ENCODE measurements at regions of chr16 and their contacts with region 1.

Region 1: DNA sequence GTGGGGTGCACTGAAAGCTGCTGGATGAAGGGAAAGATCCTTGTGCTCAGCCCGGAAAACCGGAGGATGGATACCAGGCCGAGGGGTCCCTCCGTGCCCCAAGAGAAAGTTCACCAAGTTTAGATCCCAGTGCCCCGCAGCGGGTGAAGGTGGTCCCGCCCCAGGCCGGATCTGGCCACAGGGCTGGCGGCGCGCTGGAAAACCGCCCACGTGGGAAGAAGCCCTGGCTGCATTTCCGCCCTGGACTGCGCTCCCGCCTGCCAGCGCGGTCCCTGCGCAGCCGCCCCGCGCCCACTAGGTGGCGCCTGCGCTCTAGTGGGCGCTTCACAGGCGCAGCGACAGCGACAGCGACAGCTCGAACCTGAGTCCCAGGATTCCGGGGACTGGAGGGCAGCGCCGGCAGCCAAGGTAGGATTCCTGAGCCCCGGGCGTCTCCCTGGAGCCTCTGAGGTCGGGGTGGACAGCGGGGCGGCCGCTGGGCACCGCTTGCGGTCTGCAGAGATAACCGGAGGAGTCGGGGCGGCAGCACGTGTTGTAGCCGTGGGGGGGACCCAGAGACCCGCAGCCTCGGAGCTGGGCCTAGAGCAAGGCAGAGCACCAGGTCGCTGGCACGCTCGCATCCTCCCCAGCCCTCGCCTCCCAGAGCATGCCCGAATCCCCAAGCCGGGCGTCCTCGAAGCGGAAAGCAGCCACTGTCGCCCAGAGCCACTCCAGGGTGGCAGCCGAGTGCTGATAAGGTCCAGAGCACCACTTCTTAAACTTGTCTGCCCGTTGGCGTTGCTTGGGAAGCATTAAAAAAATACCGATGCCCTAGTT is at the start of gene CHD9:
- DNase-seq: peak; percentile 82
- ATAC-seq: peak; percentile 93
- H3K4me3 Mint-ChIP-seq: peak within 1 kb of the TSS; percentile 75
- H3K27ac Mint-ChIP-seq: peak within 1 kb of the TSS; percentile 87
- H3K4me1 Mint-ChIP-seq: peaks cover 52% of the 10 kb centered on the region
- H3K27me3 Mint-ChIP-seq: no peaks in the 10 kb centered on the region
- total RNA-seq, gene CHD9: 23.7 to 32.7 TPM

Region 2: DNA sequence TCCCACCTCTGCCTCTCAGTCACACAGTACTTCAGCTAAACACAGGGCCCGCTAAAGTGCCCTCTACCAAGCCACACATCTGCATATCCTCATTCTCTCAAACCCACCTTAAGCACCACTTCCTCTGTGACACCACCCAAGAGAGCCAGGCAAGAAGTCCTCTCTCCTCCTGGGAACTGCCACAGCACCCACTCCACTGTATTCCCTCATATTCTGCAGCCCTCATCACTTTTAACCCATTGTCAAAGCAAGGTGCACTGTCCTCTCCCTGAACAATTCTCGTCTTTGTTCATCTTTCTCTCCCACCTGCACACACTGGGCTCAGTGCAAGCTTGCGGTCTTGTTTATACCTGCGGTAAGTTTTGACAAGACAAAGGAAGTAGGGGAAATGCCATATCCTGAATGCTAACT is 13.6 kb after region 1 on chr16:
- CTCF ChIA-PET with region 1: interaction called, 20 read pairs
- DNase-seq: peak; percentile 80
- ATAC-seq: peak; percentile 84
- H3K4me3 Mint-ChIP-seq: peak overlapping the region; percentile 56
- H3K27ac Mint-ChIP-seq: peak overlapping the region; percentile 85
- H3K4me1 Mint-ChIP-seq: peaks cover 59% of the 10 kb centered on the region
- H3K27me3 Mint-ChIP-seq: no peaks in the 10 kb centered on the region

Region 3: GRCh38 chr16:53130159-53131049 is 75.5 kb after region 1 on chr16:
- CTCF ChIA-PET with region 1: interaction called, 23 read pairs
- DNase-seq: peak; percentile 95
- ATAC-seq: peak; percentile 95
- H3K4me3 Mint-ChIP-seq: peak overlapping the region; percentile 79
- H3K27ac Mint-ChIP-seq: peak overlapping the region; percentile 54
- H3K4me1 Mint-ChIP-seq: peaks cover 20% of the 10 kb centered on the region
- H3K27me3 Mint-ChIP-seq: no peaks in the 10 kb centered on the region

Region 4: DNA sequence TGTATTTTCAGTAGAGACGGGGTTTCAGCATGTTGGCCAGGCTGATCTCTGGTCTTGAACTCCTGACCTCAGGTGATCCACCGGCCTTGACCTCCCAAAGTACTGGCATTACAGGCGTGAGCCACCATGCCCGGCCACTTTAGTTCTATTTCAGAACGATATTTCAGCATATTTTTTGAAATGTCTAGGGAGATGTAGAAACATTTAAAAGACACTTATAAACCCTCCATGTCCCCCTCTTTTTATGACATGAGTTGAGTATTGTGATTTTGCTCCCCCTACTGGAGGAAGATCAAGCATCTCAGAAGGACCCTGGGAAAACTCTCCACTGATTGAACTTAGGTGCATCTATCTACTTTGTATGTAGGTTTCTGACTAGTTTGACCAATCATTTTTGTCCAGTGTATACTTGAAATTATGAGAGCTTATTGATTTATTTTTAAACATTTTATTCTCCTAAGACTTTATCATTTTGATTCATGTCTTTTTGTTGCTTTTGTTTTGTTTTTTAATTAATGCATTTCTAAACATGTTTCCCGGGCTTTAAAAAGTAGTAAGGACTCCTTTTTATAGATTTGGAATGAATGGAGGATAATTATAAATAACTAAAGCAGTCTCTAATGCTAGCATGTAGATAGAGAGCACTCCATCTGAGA is 105.0 kb after region 1 on chr16:
- CTCF ChIA-PET with region 1: interaction called, 52 read pairs
- DNase-seq: no peak
- ATAC-seq: peak; percentile 82
- H3K4me3 Mint-ChIP-seq: no peak overlapping the region
- H3K27ac Mint-ChIP-seq: no peak overlapping the region
- H3K4me1 Mint-ChIP-seq: no peaks in the 10 kb centered on the region
- H3K27me3 Mint-ChIP-seq: no peaks in the 10 kb centered on the region

Region 5: DNA sequence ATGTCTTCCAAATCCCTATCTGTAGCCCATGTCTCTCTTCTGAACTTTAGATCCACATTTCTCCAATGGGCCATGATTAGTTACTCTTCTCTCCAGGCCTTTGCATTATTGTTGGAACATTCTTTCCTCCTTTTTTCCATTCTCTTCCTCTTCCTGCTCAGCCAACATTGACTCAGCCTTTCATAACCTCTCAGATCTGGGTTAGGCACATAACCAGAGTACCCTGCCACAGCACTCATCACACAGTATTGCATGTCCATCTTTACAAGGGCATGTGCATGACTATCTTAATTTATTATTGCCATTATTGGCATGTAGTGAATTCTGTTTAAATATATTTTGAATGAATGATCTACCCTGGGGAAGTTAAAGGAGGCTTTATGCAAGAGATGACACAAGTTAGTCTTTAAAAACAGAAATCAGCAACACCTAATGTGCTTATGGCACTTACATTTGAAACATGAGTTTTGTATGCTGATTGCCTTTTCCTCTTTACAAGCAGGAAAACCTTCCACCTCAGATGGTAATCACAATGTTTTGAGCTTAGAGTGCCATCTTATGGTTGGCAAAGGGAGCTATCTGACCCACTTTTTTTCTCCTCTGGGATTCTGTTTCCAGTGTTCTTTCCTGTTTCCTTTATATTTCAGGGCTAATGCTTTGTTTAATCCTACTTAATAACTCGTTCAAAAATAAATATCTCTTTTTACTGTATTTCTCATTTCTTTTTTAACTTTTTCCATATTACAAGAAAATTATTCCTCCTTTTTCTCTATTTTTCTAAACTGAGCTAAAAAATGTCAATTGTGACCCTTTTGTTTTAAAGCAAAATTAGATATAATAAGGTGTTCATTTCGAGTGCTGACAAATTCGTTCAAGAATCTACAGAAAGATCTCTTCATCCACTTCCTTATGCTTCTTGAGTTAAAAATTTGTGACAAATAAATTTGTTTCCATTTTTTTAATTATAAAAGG is 228.4 kb after region 1 on chr16:
- CTCF ChIA-PET with region 1: interaction called, 17 read pairs
- DNase-seq: no peak
- ATAC-seq: no peak
- H3K4me3 Mint-ChIP-seq: no peak overlapping the region
- H3K27ac Mint-ChIP-seq: no peak overlapping the region
- H3K4me1 Mint-ChIP-seq: no peaks in the 10 kb centered on the region
- H3K27me3 Mint-ChIP-seq: no peaks in the 10 kb centered on the region